Activated T-helper 2 cell treated with anti-CD3 and anti-CD28 coated beads, Interferon-gamma antibody, Interleukin-2, Interleukin-4, amounts not matched to agents 10 μg/mL and 5 μg/mL and 100 μg/mL, durations not matched to agents 14 hours and 24 hours and 36 hours (primary cell): ENCODE measurements at regions of chr13 and their contacts with region 1.

Region 1: DNA sequence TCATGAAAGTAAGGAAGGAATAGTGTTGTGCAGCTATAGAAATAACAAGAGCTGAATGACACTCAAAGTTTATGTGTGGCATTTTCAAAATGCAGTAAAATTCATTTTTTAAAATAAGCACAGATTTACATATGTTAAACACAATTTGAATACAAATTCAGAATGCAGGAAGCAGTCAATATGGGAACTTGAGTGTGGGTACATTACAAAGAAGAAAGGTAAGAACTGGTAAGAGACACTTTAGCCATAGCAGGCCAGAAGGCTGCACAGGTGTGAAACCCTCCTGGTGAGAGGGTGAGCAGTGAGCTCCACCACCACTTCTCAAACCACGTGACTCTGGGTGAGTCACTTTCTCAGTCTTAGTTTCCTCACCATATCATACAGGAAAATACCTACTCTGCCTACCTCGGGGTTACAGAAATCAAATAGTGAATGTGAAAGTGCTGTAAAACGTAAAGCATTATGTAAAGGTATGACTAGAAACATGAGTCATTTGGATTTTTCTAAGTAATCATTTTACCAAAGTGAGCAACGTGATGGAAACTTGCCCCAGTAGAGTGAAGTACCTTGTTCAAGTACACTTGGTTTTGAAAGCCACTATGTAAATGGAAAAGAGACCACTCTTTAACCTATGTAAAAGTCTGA is 40.5 kb downstream of the USP12 start:
- DNase-seq: peak; percentile 75
- H3K4me3 Mint-ChIP-seq: peak overlapping the region; percentile 31
- H3K27ac Mint-ChIP-seq: peak overlapping the region; percentile 80
- H3K4me1 Mint-ChIP-seq: peaks cover 73% of the 10 kb centered on the region
- H3K27me3 Mint-ChIP-seq: no peaks in the 10 kb centered on the region

Region 2: DNA sequence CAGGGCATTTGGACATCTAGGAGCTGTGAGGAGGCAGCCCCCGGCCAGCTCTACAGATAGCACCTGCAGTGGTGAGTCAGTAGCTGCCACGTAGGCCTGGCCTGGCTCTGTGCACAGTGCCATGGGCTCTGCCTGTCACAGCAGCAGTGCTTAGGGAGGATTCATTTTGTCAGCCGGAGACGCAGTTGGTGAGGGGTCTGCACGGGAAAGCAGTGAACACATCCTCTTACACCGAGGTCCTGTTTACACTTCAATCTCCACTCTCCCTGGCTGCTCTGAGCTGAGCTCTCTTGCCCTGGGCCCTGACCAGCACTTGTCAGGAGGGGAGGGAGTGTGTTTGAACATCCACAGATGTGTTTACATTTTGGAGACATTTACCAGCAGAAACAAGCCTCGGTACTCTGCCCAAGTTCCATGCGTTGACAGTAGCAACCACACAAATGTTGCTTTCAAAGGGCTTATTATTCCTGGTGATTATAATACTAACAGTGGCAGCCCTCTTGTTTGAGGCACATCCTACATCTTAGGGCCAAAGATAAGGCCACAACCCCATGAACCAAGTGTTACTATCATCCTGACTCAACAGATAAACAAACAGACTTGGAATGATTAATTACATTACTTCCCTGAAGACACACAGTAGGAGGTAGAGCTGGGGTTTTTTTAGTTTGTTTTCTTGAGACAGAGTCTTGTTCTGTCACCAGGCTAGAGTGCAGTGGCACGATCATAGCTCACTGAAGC is 108.4 kb before region 1 on chr13:
- intact Hi-C with region 1: loop called (anchors 1 kb)
- DNase-seq: no peak
- H3K4me3 Mint-ChIP-seq: no peak overlapping the region
- H3K27ac Mint-ChIP-seq: peak overlapping the region; percentile 31
- H3K4me1 Mint-ChIP-seq: peaks cover 11% of the 10 kb centered on the region
- H3K27me3 Mint-ChIP-seq: peaks cover 2% of the 10 kb centered on the region

Region 3: DNA sequence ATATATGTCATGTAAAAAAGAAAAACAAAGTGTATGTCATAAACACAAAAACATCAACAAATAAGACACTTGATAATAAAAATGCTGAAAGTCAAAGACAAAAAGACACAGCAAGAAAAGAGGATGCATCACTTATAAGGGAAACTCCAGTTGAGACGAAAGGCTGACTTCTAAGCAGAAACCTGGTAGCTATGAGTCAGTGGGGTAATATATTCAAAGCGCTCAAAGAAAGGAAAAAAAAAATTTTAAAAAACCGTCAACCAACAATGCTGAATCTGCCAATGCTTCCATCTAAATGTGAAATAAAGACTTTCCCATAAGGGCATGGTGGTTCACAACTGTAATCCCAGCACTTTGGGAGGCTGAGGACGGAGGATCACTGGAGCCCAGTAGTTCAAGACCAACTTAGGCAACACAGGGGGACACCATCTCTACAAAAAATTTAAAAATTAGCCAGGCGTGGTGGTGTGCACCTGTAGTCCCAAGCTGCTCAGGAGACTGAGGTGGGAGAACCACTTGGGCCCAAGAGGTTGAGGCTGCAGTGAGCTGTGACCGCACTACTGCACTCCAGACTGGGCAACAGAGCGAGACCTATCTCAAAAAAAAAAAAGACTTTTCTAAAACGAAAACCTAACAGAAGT is 16.5 kb after region 1 on chr13:
- intact Hi-C with region 1: loop called (anchors 1 kb)
- DNase-seq: no peak
- H3K4me3 Mint-ChIP-seq: peak overlapping the region; percentile 26
- H3K27ac Mint-ChIP-seq: peak overlapping the region; percentile 93
- H3K4me1 Mint-ChIP-seq: peaks cover 52% of the 10 kb centered on the region
- H3K27me3 Mint-ChIP-seq: no peaks in the 10 kb centered on the region

Region 4: DNA sequence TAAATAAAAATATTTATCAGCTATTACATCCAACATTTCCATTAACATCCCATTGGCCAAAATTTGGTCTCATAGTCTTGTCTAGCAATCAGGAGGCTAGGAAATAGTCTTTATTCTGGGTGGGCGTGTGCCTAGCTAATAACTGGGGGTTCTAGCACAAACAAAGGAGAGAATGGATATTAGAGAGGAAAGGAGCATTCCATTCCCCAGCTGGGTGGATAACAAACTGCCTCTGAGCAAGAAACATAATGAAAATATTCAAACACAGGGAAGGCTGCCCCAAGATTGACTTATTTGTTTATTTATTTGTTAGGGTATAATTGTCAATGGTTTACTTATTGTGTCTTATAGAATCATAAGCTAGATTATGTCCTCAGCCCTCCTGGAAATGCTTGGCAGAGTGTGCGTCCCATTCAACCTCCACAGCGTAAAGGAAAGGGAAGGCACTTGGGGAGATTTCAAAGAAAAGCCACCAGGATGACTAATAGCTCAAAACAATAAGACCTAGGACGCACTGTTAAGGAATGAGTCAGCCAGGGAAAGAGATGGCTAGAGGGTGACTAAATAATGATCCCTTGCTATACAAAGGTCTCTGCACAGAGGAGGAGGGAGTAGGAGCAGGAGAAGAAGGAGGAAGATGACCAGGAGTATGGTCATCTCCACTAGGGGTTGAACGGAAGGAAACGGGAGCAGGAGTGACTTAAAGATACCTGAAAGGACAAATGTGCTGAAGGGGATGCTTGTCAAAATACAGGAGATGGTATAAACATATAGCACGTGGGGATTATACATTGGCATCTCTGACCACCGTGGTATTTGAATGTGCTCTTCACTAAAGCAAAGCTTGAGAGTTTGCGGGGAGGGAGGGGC is 64.0 kb after region 1 on chr13:
- intact Hi-C with region 1: loop called (anchors 2 kb)
- DNase-seq: no peak
- H3K4me3 Mint-ChIP-seq: no peak overlapping the region
- H3K27ac Mint-ChIP-seq: peak overlapping the region; percentile 41
- H3K4me1 Mint-ChIP-seq: peaks cover 26% of the 10 kb centered on the region
- H3K27me3 Mint-ChIP-seq: no peaks in the 10 kb centered on the region

Region 5: DNA sequence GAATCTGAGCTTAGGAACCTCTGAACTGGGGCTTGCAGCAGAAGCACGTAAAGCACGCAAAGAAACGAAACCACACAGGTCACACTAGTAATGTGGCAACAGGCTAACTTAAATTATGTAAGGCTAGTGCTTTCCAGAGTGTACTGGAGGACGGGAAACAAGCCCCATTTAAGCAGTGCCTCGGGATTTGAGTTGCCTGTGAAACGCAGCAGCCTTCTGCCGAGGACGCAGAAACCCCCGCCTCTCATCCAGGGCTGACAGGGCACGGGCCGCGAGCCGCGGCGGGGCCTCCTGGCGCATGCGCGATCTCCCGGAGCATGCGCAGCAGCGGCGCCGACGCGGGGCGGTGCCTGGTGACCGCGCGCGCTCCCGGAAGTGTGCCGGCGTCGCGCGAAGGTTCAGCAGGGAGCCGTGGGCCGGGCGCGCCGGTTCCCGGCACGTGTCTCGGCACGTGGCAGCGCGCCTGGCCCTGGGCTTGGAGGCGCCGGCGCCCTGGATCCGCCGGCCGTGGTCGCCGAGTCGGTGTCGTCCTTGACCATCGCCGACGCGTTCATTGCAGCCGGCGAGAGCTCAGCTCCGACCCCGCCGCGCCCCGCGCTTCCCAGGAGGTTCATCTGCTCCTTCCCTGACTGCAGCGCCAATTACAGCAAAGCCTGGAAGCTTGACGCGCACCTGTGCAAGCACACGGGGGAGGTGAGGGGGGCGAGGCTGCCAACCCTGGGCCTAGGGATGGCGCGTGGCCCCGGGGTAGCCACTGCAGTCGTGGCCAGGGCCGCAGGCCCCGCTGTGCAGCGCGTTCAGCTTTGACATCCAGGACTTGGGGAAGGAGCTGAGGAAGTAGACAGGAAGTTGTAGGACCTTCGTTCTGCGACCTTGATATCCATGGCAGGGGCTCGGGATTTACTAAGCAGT is 293.4 kb after region 1 on chr13 and contains the start of gene GTF3A:
- intact Hi-C with region 1: loop called (anchors 2 kb)
- DNase-seq: peak; percentile 86
- H3K4me3 Mint-ChIP-seq: peak within 1 kb of the TSS; percentile 89
- H3K27ac Mint-ChIP-seq: peak within 1 kb of the TSS; percentile 94
- H3K4me1 Mint-ChIP-seq: peaks cover 36% of the 10 kb centered on the region
- H3K27me3 Mint-ChIP-seq: no peaks in the 10 kb centered on the region
- total RNA-seq, gene GTF3A: 251 and 253 TPM in 2 replicates